ENCODE measurements at regions of chr10 and their contacts with region 1.

Region 1: DNA sequence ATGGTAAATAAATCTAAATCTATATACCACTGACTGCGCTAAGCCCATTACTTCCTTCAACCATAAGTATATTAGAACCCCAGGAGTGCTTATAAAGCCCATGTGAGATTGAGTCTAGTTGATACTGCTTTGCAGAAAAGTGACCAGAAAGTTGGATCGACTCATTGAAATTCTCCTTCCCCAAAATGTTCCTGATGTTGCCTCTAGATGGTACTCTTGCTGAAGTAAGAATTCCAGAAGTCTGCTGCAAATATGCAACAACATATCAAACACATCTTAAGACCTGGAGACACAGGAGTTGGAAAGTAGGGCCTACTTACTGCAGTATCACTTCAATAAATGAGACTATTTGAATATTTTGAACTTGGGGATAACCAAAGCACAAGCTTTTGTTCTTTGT is 550.8 kb downstream of the IPMK start:
- DNase-seq: peak; percentile 32
- ATAC-seq: peak; percentile 14; the same call in 1 of the 2 replicates
- H3K4me3 ChIP-seq: no peak overlapping the region
- H3K27ac ChIP-seq: no peak overlapping the region
- H3K4me1 ChIP-seq: no peaks in the 10 kb centered on the region
- H3K27me3 ChIP-seq: no peaks in the 10 kb centered on the region
- CTCF ChIP-seq: peak; percentile 51
- POLR2A ChIP-seq: no peak
- RAD21 ChIP-seq: peak; percentile 49

Region 2: GRCh38 chr10:58054881-58055280 is 338.0 kb after region 1 on chr10:
- CTCF ChIA-PET with region 1: no interaction called
- POLR2A ChIA-PET with region 1: no interaction called
- dilution Hi-C with region 1: no loop called
- in situ Hi-C with region 1: loop called (anchors 25 kb)
- intact Hi-C with region 1: loop called (anchors 1 kb)
- DNase-seq: peak; percentile 27
- ATAC-seq: no peak
- H3K4me3 ChIP-seq: no peak overlapping the region
- H3K27ac ChIP-seq: no peak overlapping the region
- H3K4me1 ChIP-seq: no peaks in the 10 kb centered on the region
- H3K27me3 ChIP-seq: no peaks in the 10 kb centered on the region
- CTCF ChIP-seq: no peak
- POLR2A ChIP-seq: no peak
- RAD21 ChIP-seq: no peak